ENCODE measurements at regions of chr14 and their contacts with region 1.

Region 1: GRCh38 chr14:78933948-78934524 is 763.9 kb downstream of the NRXN3 start:
- DNase-seq: peak; percentile 45
- ATAC-seq: no peak
- H3K4me3 ChIP-seq: no peak overlapping the region
- H3K27ac ChIP-seq: no peak overlapping the region
- H3K4me1 ChIP-seq: no peaks in the 10 kb centered on the region
- H3K27me3 ChIP-seq: no peaks in the 10 kb centered on the region
- CTCF ChIP-seq: peak; percentile 73

Region 2: DNA sequence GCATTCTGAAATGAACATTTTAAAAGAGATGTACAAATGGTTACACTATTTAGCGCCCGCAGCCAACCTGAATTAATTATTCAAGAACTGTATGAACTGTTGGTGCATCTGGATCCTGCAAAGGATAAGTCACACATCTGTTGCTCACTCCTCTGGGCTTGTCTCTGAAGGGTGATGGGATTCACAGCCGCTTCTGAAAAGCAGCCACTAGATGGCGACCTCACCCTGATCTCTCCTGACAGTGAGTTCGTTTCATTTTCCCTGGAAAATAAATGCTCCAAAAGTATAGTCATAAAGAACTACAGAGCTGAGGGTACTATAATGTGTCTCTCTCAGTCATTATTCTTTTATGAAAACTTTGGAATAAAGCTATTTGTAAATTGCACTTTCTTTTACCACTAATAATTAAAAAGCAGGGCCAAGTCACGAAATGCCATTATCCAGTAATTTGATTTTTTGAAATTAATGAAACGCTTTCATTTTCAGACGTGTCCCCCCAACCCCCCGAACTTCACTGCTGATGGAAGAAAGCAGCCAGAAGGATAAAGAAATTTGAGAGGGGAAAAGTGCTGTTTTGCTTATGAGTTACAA is 25.7 kb after region 1 on chr14:
- CTCF ChIA-PET with region 1: interaction called, 10 read pairs
- POLR2A ChIA-PET with region 1: no interaction called
- intact Hi-C with region 1: no loop called
- DNase-seq: peak; percentile 78
- ATAC-seq: peak; percentile 88
- H3K4me3 ChIP-seq: no peak overlapping the region
- H3K27ac ChIP-seq: no peak overlapping the region
- H3K4me1 ChIP-seq: no peaks in the 10 kb centered on the region
- H3K27me3 ChIP-seq: no peaks in the 10 kb centered on the region
- CTCF ChIP-seq: peak; percentile 93

Region 3: GRCh38 chr14:79201550-79202207 is 267.6 kb after region 1 on chr14:
- CTCF ChIA-PET with region 1: interaction called, 13 read pairs
- POLR2A ChIA-PET with region 1: no interaction called
- intact Hi-C with region 1: no loop called
- DNase-seq: peak; percentile 23
- ATAC-seq: peak; percentile 84
- H3K4me3 ChIP-seq: no peak overlapping the region
- H3K27ac ChIP-seq: no peak overlapping the region
- H3K4me1 ChIP-seq: no peaks in the 10 kb centered on the region
- H3K27me3 ChIP-seq: no peaks in the 10 kb centered on the region
- CTCF ChIP-seq: no peak

Region 4: DNA sequence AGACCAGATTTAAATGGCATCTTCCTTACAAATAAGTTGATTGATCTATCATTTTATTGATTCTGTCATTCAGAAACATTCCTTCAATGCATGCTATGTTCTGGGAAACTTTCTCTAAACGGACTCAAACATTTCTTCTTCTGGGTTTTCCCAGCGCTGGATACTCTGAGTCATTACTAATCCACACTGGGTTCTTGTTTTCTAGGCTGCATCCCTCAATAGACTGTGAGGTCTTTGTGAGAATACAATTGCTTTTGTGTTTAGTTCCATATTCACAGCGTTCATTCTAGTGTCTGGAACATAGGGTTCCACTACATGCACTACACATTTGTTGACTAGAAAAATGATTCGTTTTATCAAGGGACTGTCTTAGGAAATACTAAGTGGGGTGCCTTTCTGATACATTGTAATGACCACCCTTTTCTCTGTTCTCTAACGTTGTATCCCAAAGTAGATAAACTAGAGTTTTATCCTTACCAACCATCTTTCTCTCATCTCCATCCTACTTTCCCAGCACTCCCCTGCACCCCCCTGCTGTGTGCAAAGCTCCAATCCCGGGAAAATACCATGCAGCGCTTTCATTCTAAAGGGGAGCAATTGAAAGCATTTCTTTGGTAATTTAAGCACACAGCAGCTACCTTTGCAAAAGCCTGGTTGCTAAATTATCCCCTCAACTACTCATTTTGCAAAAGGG is 398.6 kb after region 1 on chr14:
- CTCF ChIA-PET with region 1: no interaction called
- POLR2A ChIA-PET with region 1: no interaction called
- intact Hi-C with region 1: no loop called
- DNase-seq: no peak
- ATAC-seq: no peak
- H3K4me3 ChIP-seq: no peak overlapping the region
- H3K27ac ChIP-seq: no peak overlapping the region
- H3K4me1 ChIP-seq: no peaks in the 10 kb centered on the region
- H3K27me3 ChIP-seq: no peaks in the 10 kb centered on the region
- CTCF ChIP-seq: no peak

Region 5: DNA sequence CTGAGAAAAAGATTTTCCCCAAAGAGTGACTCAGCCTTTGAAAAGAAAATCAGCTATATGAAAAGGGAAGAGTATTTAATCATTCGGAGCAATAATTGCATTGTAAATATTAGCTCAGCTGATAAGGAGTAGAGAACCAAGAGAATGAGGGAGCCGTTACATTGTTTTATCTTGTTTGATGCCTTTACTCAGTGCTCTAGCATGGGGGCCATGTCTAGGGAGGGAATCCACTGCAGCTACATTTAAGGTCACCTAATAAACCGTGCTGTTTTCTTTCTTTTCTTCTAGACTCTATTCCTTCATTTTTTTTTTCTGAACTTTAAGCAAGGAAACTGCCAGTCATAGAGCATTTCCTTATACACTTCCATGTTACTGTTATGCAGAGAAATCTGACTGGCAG is 830.3 kb after region 1 on chr14:
- CTCF ChIA-PET with region 1: interaction called, 23 read pairs
- POLR2A ChIA-PET with region 1: no interaction called
- intact Hi-C with region 1: no loop called
- DNase-seq: peak; percentile 39
- ATAC-seq: peak; percentile 59
- H3K4me3 ChIP-seq: no peak overlapping the region
- H3K27ac ChIP-seq: peak overlapping the region; percentile 47; the same call in 1 of the 2 replicates
- H3K4me1 ChIP-seq: peaks cover 16% of the 10 kb centered on the region
- H3K27me3 ChIP-seq: no peaks in the 10 kb centered on the region
- CTCF ChIP-seq: no peak

Region 6: DNA sequence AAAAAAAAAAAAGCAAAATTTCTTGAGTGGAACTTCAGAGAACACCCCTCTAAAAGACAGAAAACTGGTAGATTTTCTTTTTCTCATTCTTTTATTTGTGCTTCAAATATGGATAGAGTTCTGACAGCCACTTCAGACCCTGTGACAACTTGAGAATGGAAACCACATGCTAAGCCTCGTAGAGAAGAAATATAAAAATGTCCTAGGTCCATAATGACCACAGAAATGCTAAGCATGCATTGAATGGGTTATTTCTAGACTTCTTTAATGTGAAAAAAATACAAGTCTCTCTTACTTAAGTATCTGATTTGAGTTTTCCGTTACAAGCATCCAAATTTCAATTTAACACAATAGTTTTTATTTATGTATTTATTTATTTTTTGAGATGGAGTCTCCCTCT is 1305.6 kb after region 1 on chr14:
- CTCF ChIA-PET with region 1: interaction called, 11 read pairs
- POLR2A ChIA-PET with region 1: no interaction called
- intact Hi-C with region 1: no loop called
- DNase-seq: no peak
- ATAC-seq: no peak
- H3K4me3 ChIP-seq: no peak overlapping the region
- H3K27ac ChIP-seq: no peak overlapping the region
- H3K4me1 ChIP-seq: no peaks in the 10 kb centered on the region
- H3K27me3 ChIP-seq: no peaks in the 10 kb centered on the region
- CTCF ChIP-seq: no peak

Region 7: DNA sequence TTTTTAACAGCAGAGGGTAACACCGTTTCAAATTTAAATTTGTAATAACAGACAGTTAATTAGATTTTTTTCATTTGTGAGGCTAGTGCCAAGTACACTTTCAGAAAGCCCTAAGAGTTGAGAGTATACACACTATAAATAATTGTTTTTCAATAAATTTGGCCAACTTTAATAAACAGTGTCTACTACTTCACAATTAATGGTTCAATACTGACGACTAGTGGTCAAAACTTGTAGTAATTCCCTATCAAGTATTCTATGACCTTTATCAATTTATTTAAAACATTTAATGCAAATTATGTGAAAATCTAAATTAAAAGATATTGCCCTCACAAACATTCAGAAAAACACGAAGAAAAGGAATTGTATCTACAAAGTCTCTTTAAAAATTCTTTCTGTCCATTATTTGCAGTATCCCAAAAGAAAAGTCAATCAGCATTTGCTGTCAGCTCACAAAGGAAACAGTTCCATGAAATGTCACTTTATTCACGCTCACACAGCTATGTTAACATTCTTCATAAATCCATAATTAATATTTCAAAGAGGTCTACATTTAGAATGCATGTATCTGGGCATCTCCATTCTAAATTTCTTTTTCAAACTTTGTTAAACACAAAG is 1916.3 kb after region 1 on chr14:
- CTCF ChIA-PET with region 1: interaction called, 18 read pairs
- POLR2A ChIA-PET with region 1: no interaction called
- intact Hi-C with region 1: no loop called
- DNase-seq: peak; percentile 71
- ATAC-seq: peak; percentile 45
- H3K4me3 ChIP-seq: no peak overlapping the region
- H3K27ac ChIP-seq: no peak overlapping the region
- H3K4me1 ChIP-seq: peaks cover 22% of the 10 kb centered on the region
- H3K27me3 ChIP-seq: no peaks in the 10 kb centered on the region
- CTCF ChIP-seq: peak; percentile 85